ENCODE measurements at regions of chr2 and their contacts with region 1.

Region 1: GRCh38 chr2:134683561-134684112 is 35.2 kb downstream of the TMEM163 start:
- DNase-seq: no peak
- H3K4me3 Mint-ChIP-seq: no peak overlapping the region
- H3K27ac Mint-ChIP-seq: peak overlapping the region; percentile 8
- H3K4me1 Mint-ChIP-seq: peaks cover 44% of the 10 kb centered on the region
- H3K27me3 Mint-ChIP-seq: peaks cover 16% of the 10 kb centered on the region

Region 2: GRCh38 chr2:134253804-134254203 is 429.8 kb before region 1 on chr2 and contains the start of gene MGAT5:
- intact Hi-C with region 1: loop called (anchors 5 kb)
- DNase-seq: no peak
- H3K4me3 Mint-ChIP-seq: no peak within 1 kb of the TSS
- H3K27ac Mint-ChIP-seq: no peak within 1 kb of the TSS
- H3K4me1 Mint-ChIP-seq: peaks cover 63% of the 10 kb centered on the region
- H3K27me3 Mint-ChIP-seq: peaks cover 42% of the 10 kb centered on the region
- total RNA-seq, gene MGAT5: 14.0 and 14.1 TPM in 2 replicates

Region 3: GRCh38 chr2:134527381-134527780 is 156.3 kb before region 1 on chr2:
- intact Hi-C with region 1: no loop called
- DNase-seq: no peak
- H3K4me3 Mint-ChIP-seq: no peak overlapping the region
- H3K27ac Mint-ChIP-seq: no peak overlapping the region
- H3K4me1 Mint-ChIP-seq: no peaks in the 10 kb centered on the region
- H3K27me3 Mint-ChIP-seq: peaks cover 3% of the 10 kb centered on the region

Region 4: DNA sequence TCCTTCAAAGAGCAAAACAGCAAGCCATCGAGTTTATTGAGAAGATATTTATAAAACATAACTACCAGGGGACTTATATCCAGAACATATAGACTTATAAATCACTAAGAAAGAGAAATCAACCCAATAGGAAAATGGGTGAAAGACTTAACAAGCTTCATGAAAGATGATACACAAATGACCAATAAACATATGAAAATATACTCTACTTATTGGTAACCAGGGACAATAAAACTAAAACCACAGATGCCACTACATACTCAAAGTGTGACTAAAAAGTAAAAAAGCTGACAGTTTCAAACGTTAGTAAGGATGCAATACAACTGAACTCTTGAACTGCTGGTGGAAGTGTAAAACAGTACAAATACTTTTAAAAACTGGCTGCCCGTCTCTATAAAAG is 119.1 kb before region 1 on chr2:
- intact Hi-C with region 1: loop called (anchors 10 kb)
- DNase-seq: no peak
- H3K4me3 Mint-ChIP-seq: no peak overlapping the region
- H3K27ac Mint-ChIP-seq: no peak overlapping the region
- H3K4me1 Mint-ChIP-seq: peaks cover 7% of the 10 kb centered on the region
- H3K27me3 Mint-ChIP-seq: peaks cover 19% of the 10 kb centered on the region

Region 5: GRCh38 chr2:134718817-134719814 is 35.5 kb after region 1 on chr2 and contains the start of gene TMEM163:
- intact Hi-C with region 1: loop called (anchors 1 kb)
- DNase-seq: no peak
- H3K4me3 Mint-ChIP-seq: peak within 1 kb of the TSS; percentile 43
- H3K27ac Mint-ChIP-seq: no peak within 1 kb of the TSS
- H3K4me1 Mint-ChIP-seq: peaks cover 10% of the 10 kb centered on the region
- H3K27me3 Mint-ChIP-seq: peaks cover 65% of the 10 kb centered on the region
- total RNA-seq, gene TMEM163: 0.09 and 0.27 TPM in 2 replicates

Measured in activated T-helper 2 cell treated with anti-CD3 and anti-CD28 coated beads, Interferon-gamma antibody, Interleukin-2, Interleukin-4, amounts not matched to agents 10 μg/mL and 5 μg/mL and 100 μg/mL, durations not matched to agents 14 hours and 24 hours and 36 hours (primary cell).